HCT116 (cell line): ENCODE measurements at regions of chr20 and their contacts with region 1.

Region 1: GRCh38 chr20:34312544-34313217 is 9.5 kb upstream of the AHCY start:
- DNase-seq: peak; percentile 81
- ATAC-seq: peak; percentile 79
- H3K4me3 ChIP-seq: peak overlapping the region; percentile 2 to 36; a peak in 1 of 4 replicates
- H3K27ac ChIP-seq: 0 out of 2 replicates have a peak overlapping the region, but pooled peaks have one; percentile 11
- H3K4me1 ChIP-seq: peaks cover 39 to 71% of the 10 kb centered on the region in 2 experiments
- H3K27me3 ChIP-seq: no peaks in the 10 kb centered on the region
- CTCF ChIP-seq: peak; percentile 100
- POLR2A ChIP-seq: no peak
- RAD21 ChIP-seq: peak; percentile 100

Region 2: DNA sequence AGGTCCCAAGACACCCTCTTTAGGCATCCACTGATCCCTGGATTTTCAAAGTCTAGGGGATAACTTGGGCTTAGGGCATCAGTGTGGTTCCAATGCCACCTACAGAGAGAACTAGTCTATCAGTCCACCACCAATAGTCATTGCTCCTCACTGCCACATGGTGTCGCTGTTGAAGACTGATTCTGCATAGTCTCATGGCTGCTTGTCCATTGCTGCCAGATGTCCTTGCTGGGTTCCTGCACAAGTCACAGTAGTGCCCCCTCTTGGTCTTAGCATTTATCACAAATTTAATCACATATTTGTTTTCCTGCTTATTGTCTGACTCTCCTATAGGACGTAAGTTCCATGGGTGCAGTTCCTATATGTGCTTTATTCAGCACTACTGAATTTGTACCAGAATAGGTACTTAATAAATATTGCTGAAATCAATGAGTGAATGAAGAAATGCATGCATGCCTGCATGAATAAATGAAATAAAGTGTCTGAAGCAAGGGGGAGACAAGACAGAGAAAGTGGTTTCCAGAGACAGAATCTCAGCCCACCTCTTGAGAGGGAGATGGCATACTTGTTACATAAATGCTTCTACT is 364.9 kb before region 1 on chr20:
- CTCF ChIA-PET with region 1: no interaction called
- POLR2A ChIA-PET with region 1: no interaction called
- RAD21 ChIA-PET with region 1: no interaction called
- intact Hi-C with region 1: no loop called
- DNase-seq: peak; percentile 89
- ATAC-seq: peak; percentile 97
- H3K4me3 ChIP-seq: no peak overlapping the region
- H3K27ac ChIP-seq: no peak overlapping the region
- H3K4me1 ChIP-seq: no peaks in the 10 kb centered on the region
- H3K27me3 ChIP-seq: no peaks in the 10 kb centered on the region
- CTCF ChIP-seq: peak; percentile 95 to 98 (median 96)
- POLR2A ChIP-seq: no peak
- RAD21 ChIP-seq: peak; percentile 73

Region 3: DNA sequence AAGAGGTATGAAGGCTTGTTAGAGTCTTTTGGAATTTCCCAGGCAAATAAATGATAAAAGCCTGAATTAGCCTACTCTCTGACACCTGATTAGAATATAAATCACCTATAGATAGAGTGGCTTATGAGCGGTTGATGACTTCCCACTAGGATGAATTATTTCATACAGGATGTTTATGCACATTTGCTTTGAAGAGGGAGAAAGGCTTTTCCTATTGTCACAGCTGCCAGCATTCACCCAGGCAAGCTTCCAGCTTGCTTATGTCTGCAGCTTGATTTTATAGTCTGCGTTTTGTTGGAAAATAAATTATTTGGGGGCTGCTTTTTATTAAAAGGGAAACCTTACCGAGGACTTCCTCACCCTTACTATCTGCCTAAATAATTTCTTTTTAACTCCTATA is 149.4 kb before region 1 on chr20:
- CTCF ChIA-PET with region 1: no interaction called
- POLR2A ChIA-PET with region 1: no interaction called
- RAD21 ChIA-PET with region 1: no interaction called
- intact Hi-C with region 1: no loop called
- DNase-seq: no peak
- ATAC-seq: no peak
- H3K4me3 ChIP-seq: no peak overlapping the region
- H3K27ac ChIP-seq: no peak overlapping the region
- H3K4me1 ChIP-seq: no peaks in the 10 kb centered on the region
- H3K27me3 ChIP-seq: no peaks in the 10 kb centered on the region
- CTCF ChIP-seq: no peak
- POLR2A ChIP-seq: no peak
- RAD21 ChIP-seq: no peak

Region 4: DNA sequence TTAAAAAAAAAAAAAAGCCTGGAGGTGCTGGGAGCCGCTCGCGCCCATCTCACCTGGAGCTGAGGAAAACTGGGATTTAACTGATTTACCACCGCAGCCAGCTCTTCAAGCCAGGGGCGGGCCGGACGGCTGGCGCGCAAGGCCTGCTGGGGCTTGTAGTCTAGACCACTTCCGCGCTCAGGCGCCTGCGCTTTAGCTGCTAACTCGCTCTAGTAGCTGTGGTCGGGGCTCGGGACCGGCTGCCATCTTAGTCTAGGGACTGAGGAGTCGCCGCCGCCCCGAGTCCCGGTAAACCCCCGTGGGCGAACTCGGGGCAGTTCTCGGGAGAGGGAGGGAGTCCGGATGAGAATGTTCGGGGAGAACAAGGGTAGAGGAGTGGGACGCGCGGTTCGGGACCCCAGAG is 50.4 kb after region 1 on chr20 and contains the start of gene ITCH:
- CTCF ChIA-PET with region 1: interaction called, 16 read pairs
- POLR2A ChIA-PET with region 1: interaction called, 11 read pairs
- RAD21 ChIA-PET with region 1: interaction called in 1 of 2 experiments, 3 read pairs
- intact Hi-C with region 1: loop called (anchors 2 kb)
- DNase-seq: peak; percentile 88
- ATAC-seq: peak; percentile 97
- H3K4me3 ChIP-seq: peak within 1 kb of the TSS; percentile 86 to 87
- H3K27ac ChIP-seq: peak within 1 kb of the TSS; percentile 82
- H3K4me1 ChIP-seq: peaks cover 22 to 62% of the 10 kb centered on the region in 2 experiments
- H3K27me3 ChIP-seq: no peaks in the 10 kb centered on the region
- CTCF ChIP-seq: no peak
- POLR2A ChIP-seq: peak; percentile 79
- RAD21 ChIP-seq: no peak
- total RNA-seq, gene ITCH: 78.8 TPM

Region 5: GRCh38 chr20:34473262-34473883 is 160.7 kb after region 1 on chr20:
- CTCF ChIA-PET with region 1: interaction called, 56 read pairs
- POLR2A ChIA-PET with region 1: interaction called, 9 read pairs
- RAD21 ChIA-PET with region 1: interaction called, 11 to 25 read pairs
- intact Hi-C with region 1: loop called (anchors 1 kb)
- DNase-seq: peak; percentile 48
- ATAC-seq: peak; percentile 91
- H3K4me3 ChIP-seq: no peak overlapping the region
- H3K27ac ChIP-seq: peak overlapping the region; percentile 81; the same call in 1 of the 2 replicates
- H3K4me1 ChIP-seq: peaks cover 41 to 45% of the 10 kb centered on the region in 2 experiments
- H3K27me3 ChIP-seq: no peaks in the 10 kb centered on the region
- CTCF ChIP-seq: peak; percentile 56 to 94 (median 62)
- POLR2A ChIP-seq: no peak
- RAD21 ChIP-seq: peak; percentile 89

Region 6: GRCh38 chr20:34522969-34523871 is 210.5 kb after region 1 on chr20:
- CTCF ChIA-PET with region 1: interaction called, 127 read pairs
- POLR2A ChIA-PET with region 1: interaction called, 6 read pairs
- RAD21 ChIA-PET with region 1: interaction called, 19 to 24 read pairs
- intact Hi-C with region 1: loop called (anchors 1 kb)
- DNase-seq: peak; percentile 42
- ATAC-seq: peak; percentile 64
- H3K4me3 ChIP-seq: no peak overlapping the region
- H3K27ac ChIP-seq: no peak overlapping the region
- H3K4me1 ChIP-seq: peaks cover 30 to 44% of the 10 kb centered on the region in 2 experiments
- H3K27me3 ChIP-seq: no peaks in the 10 kb centered on the region
- CTCF ChIP-seq: peak; percentile 83 to 84 (median 84)
- POLR2A ChIP-seq: no peak
- RAD21 ChIP-seq: peak; percentile 90

Region 7: GRCh38 chr20:34768096-34768495 is 455.4 kb after region 1 on chr20:
- CTCF ChIA-PET with region 1: interaction called, 17 read pairs
- POLR2A ChIA-PET with region 1: no interaction called
- RAD21 ChIA-PET with region 1: interaction called in 1 of 2 experiments, 5 read pairs
- intact Hi-C with region 1: no loop called
- DNase-seq: no peak
- ATAC-seq: no peak
- H3K4me3 ChIP-seq: no peak overlapping the region
- H3K27ac ChIP-seq: no peak overlapping the region
- H3K4me1 ChIP-seq: no peaks in the 10 kb centered on the region
- H3K27me3 ChIP-seq: no peaks in the 10 kb centered on the region
- CTCF ChIP-seq: no peak
- POLR2A ChIP-seq: no peak
- RAD21 ChIP-seq: no peak

Region 8: GRCh38 chr20:35541783-35542588 is 1229.3 kb after region 1 on chr20 and contains the start of gene ERGIC3:
- CTCF ChIA-PET with region 1: no interaction called
- POLR2A ChIA-PET with region 1: no interaction called
- RAD21 ChIA-PET with region 1: no interaction called
- intact Hi-C with region 1: no loop called
- DNase-seq: peak; percentile 86
- ATAC-seq: peak; percentile 96
- H3K4me3 ChIP-seq: peak within 1 kb of the TSS; percentile 94
- H3K27ac ChIP-seq: peak within 1 kb of the TSS; percentile 85
- H3K4me1 ChIP-seq: peaks cover 9 to 26% of the 10 kb centered on the region in 2 experiments
- H3K27me3 ChIP-seq: no peaks in the 10 kb centered on the region
- CTCF ChIP-seq: no peak
- POLR2A ChIP-seq: peak; percentile 81
- RAD21 ChIP-seq: no peak
- total RNA-seq, gene ERGIC3: 229 TPM